PC-3 (cell line): ENCODE measurements at regions of chr1 and their contacts with region 1.

Region 1: GRCh38 chr1:147494998-147495580 is 46.2 kb upstream of the BCL9 start:
- DNase-seq: peak; percentile 91
- ATAC-seq: peak; percentile 98
- H3K4me3 ChIP-seq: no peak overlapping the region
- H3K27ac ChIP-seq: no peak overlapping the region
- H3K4me1 ChIP-seq: no peaks in the 10 kb centered on the region
- H3K27me3 ChIP-seq: no peaks in the 10 kb centered on the region
- CTCF ChIP-seq: peak; percentile 99

Region 2: GRCh38 chr1:147273409-147274336 is 221.4 kb before region 1 on chr1:
- CTCF ChIA-PET with region 1: interaction called, 26 read pairs
- POLR2A ChIA-PET with region 1: no interaction called
- intact Hi-C with region 1: loop called (anchors 1 kb)
- DNase-seq: peak; percentile 92
- ATAC-seq: peak; percentile 82
- H3K4me3 ChIP-seq: peak overlapping the region; percentile 26
- H3K27ac ChIP-seq: peak overlapping the region; percentile 41
- H3K4me1 ChIP-seq: peaks cover 30% of the 10 kb centered on the region
- H3K27me3 ChIP-seq: no peaks in the 10 kb centered on the region
- CTCF ChIP-seq: peak; percentile 90

Region 3: GRCh38 chr1:147515046-147515869 is 20.2 kb after region 1 on chr1:
- CTCF ChIA-PET with region 1: no interaction called
- POLR2A ChIA-PET with region 1: no interaction called
- intact Hi-C with region 1: loop called (anchors 1 kb)
- DNase-seq: peak; percentile 96
- ATAC-seq: peak; percentile 100
- H3K4me3 ChIP-seq: no peak overlapping the region
- H3K27ac ChIP-seq: peak overlapping the region; percentile 83
- H3K4me1 ChIP-seq: peaks cover 30% of the 10 kb centered on the region
- H3K27me3 ChIP-seq: no peaks in the 10 kb centered on the region
- CTCF ChIP-seq: peak; percentile 82

Region 4: DNA sequence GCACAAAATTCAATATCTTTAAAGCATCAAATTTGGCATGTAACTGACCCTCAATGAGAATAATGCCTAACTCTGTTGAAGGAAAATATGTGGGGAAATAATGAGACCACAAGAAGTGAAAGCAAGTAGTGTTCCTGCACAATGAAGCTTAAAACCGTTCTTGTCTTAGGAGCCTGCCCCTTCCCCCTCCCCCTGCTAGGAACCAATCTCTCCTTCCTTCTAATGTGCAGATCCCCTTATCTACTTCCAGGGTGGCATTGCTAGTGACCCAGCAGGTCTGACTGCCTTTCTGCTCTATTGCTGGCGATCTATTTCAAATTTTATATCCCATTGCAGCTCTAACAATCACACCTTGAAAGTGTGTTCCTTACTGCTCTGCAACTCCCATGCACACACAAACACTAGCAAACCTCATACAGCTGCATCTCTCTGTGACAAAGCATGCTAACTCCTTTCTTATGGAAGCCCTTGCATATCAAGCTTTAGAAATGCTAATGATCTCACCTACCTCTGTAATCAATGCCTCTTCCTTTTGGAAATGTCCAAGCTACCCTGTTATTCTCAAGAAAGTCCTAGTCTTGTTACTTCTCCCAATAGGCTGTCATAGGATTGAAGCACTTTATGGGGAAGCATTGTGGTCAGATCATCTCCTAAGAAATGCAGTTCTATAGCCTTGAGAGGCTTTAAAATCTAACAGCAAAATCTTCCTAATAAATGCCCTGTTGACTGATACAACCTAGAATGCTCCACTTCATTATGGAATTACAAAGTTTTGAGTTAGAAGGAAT is 72.7 kb after region 1 on chr1:
- CTCF ChIA-PET with region 1: no interaction called
- POLR2A ChIA-PET with region 1: no interaction called
- intact Hi-C with region 1: no loop called
- DNase-seq: no peak
- ATAC-seq: no peak
- H3K4me3 ChIP-seq: no peak overlapping the region
- H3K27ac ChIP-seq: no peak overlapping the region
- H3K4me1 ChIP-seq: no peaks in the 10 kb centered on the region
- H3K27me3 ChIP-seq: no peaks in the 10 kb centered on the region
- CTCF ChIP-seq: no peak

Region 5: DNA sequence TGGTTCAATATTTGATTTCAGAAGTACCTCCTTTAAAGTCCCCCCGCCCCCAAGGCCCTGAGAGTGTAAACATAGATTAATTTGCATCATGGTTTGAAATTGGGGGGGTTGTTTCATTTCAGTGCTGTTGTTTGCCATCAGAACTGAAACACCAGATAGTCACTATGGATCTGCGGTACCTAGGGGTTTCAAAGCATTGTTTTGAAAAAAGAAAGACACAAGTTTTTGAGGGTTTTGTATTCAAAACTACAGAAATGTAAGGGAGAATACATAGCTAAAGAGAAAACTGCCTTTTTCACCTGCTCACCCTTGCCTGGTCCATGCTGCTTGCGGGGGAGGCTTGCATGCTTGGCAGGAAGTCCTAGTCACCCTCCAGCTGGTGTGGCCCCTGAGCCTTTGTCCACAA is 115.9 kb after region 1 on chr1:
- CTCF ChIA-PET with region 1: no interaction called
- POLR2A ChIA-PET with region 1: no interaction called
- intact Hi-C with region 1: loop called (anchors 5 kb)
- DNase-seq: no peak
- ATAC-seq: no peak
- H3K4me3 ChIP-seq: no peak overlapping the region
- H3K27ac ChIP-seq: no peak overlapping the region
- H3K4me1 ChIP-seq: peaks cover 23% of the 10 kb centered on the region
- H3K27me3 ChIP-seq: no peaks in the 10 kb centered on the region
- CTCF ChIP-seq: no peak

Region 6: DNA sequence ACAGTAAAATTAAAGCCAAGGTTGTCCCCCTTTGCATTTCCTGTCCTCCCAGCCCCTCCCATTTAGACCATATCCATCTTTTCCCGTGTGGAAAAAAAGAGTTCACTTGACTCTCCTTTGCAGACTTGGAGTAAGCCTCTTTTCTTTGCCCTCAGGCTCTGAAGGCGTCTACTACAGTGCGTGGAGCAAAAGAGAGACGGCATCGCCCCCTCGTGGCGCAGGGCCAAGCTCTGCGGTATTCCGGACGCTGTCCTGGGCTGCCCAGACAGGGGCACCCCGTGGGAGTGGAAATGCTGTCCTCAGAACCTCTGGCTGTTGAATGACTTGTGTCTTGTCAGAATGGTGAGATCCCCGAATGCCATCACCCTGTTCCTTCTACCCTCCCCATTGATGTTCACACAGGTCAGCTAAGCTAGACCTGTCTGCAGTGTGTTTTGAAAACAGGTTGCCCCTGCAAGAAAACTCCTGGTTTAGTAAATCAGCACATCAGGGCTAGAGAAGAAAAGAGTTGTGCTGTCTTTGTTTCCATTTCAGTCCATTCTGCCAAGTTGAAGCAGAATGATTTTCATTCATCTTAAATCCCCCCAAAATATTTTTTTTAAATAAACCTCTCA is 395.2 kb after region 1 on chr1:
- CTCF ChIA-PET with region 1: no interaction called
- POLR2A ChIA-PET with region 1: no interaction called
- intact Hi-C with region 1: loop called (anchors 2 kb)
- DNase-seq: peak; percentile 97
- ATAC-seq: peak; percentile 86
- H3K4me3 ChIP-seq: no peak overlapping the region
- H3K27ac ChIP-seq: no peak overlapping the region
- H3K4me1 ChIP-seq: peaks cover 26% of the 10 kb centered on the region
- H3K27me3 ChIP-seq: no peaks in the 10 kb centered on the region
- CTCF ChIP-seq: peak; percentile 98